K562 (cell line): ENCODE measurements at regions of chr13 and their contacts with region 1.

Region 1: DNA sequence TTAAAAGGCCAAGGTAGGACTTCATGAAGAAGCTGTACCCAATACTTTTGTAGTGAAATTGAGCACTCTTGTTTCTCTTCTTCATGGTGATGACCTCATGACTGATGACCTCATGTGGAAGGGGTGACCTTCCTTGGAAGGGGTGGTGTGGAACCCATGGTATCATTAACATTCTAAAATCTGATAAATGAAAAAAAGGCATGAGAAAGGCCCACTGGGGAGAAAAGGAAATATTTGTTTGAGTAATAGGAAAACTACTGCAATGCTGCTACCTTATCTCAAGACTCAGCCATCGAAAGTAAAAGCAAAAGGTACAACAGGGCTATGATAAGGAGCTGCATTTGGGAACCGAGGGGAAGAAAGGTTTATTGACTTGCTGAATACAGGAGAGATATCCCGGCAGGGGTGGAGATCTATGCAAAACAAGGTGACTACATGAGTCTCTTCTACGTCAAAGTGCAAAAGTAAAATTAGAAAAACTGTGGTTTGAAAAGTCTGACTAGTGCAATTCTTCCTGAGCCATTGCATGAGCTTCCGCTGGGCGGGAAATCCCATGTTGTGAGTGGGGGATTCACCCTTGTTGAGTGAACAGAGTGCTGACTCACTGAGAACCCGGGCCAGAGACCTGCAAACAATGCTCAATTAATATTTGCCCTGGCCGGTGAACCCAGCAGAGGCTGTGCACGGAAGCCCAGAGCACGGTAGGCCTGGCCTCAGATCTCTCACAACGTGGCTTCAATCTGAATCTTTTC is 138.9 kb upstream of the RFC3 start:
- DNase-seq: peak; percentile 5 to 38 (median 8)
- ATAC-seq: peak; percentile 81
- H3K4me3 ChIP-seq: no peak overlapping the region
- H3K27ac ChIP-seq: peak overlapping the region; percentile 63; the same call in 1 of the 3 replicates
- H3K4me1 ChIP-seq: no peaks in the 10 kb centered on the region; a peak in 1 of 5 replicates
- H3K27me3 ChIP-seq: no peaks in the 10 kb centered on the region
- CTCF ChIP-seq: no peak
- EP300 ChIP-seq: no peak
- POLR2A ChIP-seq: no peak
- RAD21 ChIP-seq: no peak

Region 2: GRCh38 chr13:33723772-33724435 is 44.8 kb after region 1 on chr13:
- CTCF ChIA-PET with region 1: no interaction called
- POLR2A ChIA-PET with region 1: no interaction called
- in situ Hi-C with region 1: no loop called
- intact Hi-C with region 1: loop called (anchors 5 kb)
- DNase-seq: peak; percentile 6 to 59 (median 13)
- ATAC-seq: peak; percentile 86
- H3K4me3 ChIP-seq: no peak overlapping the region
- H3K27ac ChIP-seq: no peak overlapping the region
- H3K4me1 ChIP-seq: no peaks in the 10 kb centered on the region
- H3K27me3 ChIP-seq: no peaks in the 10 kb centered on the region
- CTCF ChIP-seq: peak; percentile 44 to 63 (median 55); a peak in 5 of 6 replicates
- EP300 ChIP-seq: no peak
- POLR2A ChIP-seq: no peak
- RAD21 ChIP-seq: peak; percentile 66 to 81

Region 3: DNA sequence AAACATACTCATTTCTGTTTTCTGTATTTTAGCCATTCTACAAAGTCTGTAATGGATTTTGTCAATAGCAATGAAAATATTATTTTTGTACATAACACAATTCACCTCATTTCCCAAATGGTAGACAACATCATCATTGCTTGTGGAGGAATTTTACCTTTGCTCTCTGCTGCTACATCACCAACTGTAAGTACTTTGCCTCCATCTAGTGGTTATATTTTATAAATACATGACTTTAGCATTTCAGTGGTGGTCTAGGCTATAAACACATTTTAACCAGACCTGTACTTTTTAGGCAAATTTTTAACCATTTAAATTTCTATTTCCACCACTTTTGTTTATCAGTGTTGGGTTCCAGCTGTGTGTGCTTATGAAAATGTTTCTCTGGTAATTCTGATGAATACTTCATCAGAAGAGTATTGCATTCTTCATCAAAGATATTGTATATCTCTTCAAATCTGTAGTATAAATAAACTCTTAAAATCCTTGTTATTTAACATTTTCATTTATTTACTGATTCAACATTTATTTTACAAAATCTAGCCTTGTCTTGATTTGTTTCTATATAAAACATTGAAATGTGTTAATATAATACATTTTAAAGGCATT is 1485.3 kb after region 1 on chr13:
- CTCF ChIA-PET with region 1: no interaction called
- POLR2A ChIA-PET with region 1: no interaction called
- in situ Hi-C with region 1: no loop called
- intact Hi-C with region 1: loop called (anchors 2 kb)
- DNase-seq: peak; percentile 6 to 17 (median 14)
- ATAC-seq: peak; percentile 61; the same call in 1 of the 3 replicates
- H3K4me3 ChIP-seq: no peak overlapping the region
- H3K27ac ChIP-seq: no peak overlapping the region
- H3K4me1 ChIP-seq: no peaks in the 10 kb centered on the region
- H3K27me3 ChIP-seq: no peaks in the 10 kb centered on the region
- CTCF ChIP-seq: peak; percentile 14 to 58 (median 27); a peak in 3 of 6 replicates
- EP300 ChIP-seq: no peak
- POLR2A ChIP-seq: no peak
- RAD21 ChIP-seq: peak; percentile 70 to 76